Activated naive CD4-positive, alpha-beta T cell treated with anti-CD3 and anti-CD28 coated beads for 36 hours (primary cell): ENCODE measurements at regions of chr21 and their contacts with region 1.

Region 1: GRCh38 chr21:29298348-29299045 is at the start of gene BACH1:
- DNase-seq: peak; percentile 87
- H3K4me3 Mint-ChIP-seq: peak within 1 kb of the TSS; percentile 78
- H3K27ac Mint-ChIP-seq: peak within 1 kb of the TSS; percentile 76
- H3K4me1 Mint-ChIP-seq: peaks cover 66% of the 10 kb centered on the region
- H3K27me3 Mint-ChIP-seq: no peaks in the 10 kb centered on the region
- total RNA-seq, gene BACH1: 22.6 to 23.2 TPM

Region 2: DNA sequence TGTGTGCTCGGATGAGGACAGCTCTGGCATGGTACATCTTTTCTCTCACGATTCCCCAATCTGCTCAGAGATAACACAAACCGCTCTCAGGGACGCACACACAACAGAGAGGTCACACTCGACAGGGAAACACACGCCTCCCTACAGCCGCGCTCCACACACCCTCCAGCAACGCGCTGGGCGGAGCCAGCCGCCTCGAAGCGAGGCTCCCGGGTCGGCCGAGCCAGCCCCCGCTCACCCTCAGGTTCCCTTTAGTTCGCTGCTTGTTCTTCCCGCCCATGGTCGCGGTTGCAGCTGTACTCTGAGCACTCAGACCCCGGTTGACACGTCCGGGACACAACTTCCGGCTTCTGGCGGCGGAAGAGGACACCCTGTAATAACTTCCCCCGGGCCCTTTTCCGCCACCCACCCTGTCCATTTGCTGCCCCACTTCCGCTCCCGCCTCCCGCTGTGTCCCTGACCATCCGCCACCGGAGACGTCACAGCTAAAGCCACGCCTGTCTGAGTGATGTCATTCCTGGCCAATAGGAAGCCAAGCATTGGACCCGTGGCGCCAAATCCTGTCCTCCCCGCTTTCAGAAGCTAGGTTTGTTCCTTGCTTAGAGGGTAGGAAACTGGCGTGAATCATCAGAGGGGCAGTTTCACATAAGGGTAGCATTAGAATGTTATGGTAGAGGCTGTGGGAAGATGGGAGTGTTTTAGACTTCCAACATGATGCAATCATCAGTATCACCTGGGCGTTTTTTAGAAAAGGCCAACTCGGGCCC is 305.8 kb before region 1 on chr21 and contains the start of gene LTN1:
- CTCF ChIA-PET with region 1: no interaction called
- intact Hi-C with region 1: loop called (anchors 1 kb)
- DNase-seq: peak; percentile 100
- H3K4me3 Mint-ChIP-seq: peak within 1 kb of the TSS; percentile 99
- H3K27ac Mint-ChIP-seq: peak within 1 kb of the TSS; percentile 97
- H3K4me1 Mint-ChIP-seq: peaks cover 51% of the 10 kb centered on the region
- H3K27me3 Mint-ChIP-seq: no peaks in the 10 kb centered on the region
- total RNA-seq, gene LTN1: 18.5 to 21.2 TPM

Region 3: DNA sequence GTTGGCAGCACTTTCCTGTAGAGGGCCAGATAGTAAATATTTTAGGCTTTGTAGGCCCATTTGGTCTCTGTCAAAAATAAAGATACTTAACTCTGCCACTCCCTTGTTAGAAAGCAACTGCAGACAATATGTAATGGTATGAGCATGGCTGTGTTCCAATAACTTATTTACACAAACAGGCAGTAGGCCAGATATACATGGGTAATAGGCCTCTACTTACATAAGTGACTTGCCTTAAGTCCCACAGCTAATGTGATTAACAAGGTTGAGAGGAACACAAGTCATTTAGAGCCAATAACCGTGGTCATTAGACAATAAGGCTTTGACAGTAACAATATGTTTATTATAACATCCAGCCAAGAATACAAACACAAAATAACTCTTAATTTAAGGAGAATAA is 242.5 kb before region 1 on chr21:
- CTCF ChIA-PET with region 1: no interaction called
- intact Hi-C with region 1: no loop called
- DNase-seq: no peak
- H3K4me3 Mint-ChIP-seq: no peak overlapping the region
- H3K27ac Mint-ChIP-seq: no peak overlapping the region
- H3K4me1 Mint-ChIP-seq: no peaks in the 10 kb centered on the region
- H3K27me3 Mint-ChIP-seq: no peaks in the 10 kb centered on the region

Region 4: DNA sequence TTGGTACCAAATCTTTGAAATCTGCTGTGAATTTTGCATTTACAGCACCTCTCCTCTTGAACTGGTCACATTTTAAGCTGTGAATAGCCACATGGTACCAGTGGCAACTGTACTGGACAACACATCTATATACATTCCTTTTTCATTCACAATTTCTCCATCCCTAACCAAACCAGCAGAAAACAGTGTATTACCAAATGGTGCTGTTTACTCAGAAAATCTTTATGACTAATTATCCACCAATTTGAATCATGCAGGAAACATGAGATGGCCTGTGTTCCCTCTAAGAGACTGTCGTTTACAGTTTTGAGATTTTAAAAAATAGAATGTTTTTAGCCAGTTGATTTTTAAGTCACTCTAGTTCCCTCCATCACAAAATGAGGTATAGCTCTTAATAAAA is 207.5 kb before region 1 on chr21:
- CTCF ChIA-PET with region 1: interaction called, 5 read pairs
- intact Hi-C with region 1: loop called (anchors 1 kb)
- DNase-seq: no peak
- H3K4me3 Mint-ChIP-seq: no peak overlapping the region
- H3K27ac Mint-ChIP-seq: no peak overlapping the region
- H3K4me1 Mint-ChIP-seq: peaks cover 5% of the 10 kb centered on the region
- H3K27me3 Mint-ChIP-seq: no peaks in the 10 kb centered on the region

Region 5: GRCh38 chr21:29195981-29196669 is 102.4 kb before region 1 on chr21:
- CTCF ChIA-PET with region 1: interaction called, 4 read pairs
- intact Hi-C with region 1: loop called (anchors 1 kb)
- DNase-seq: peak; percentile 91
- H3K4me3 Mint-ChIP-seq: peak overlapping the region; percentile 63
- H3K27ac Mint-ChIP-seq: peak overlapping the region; percentile 90
- H3K4me1 Mint-ChIP-seq: peaks cover 36% of the 10 kb centered on the region
- H3K27me3 Mint-ChIP-seq: no peaks in the 10 kb centered on the region

Region 6: GRCh38 chr21:29343519-29343918 is 45.0 kb after region 1 on chr21:
- CTCF ChIA-PET with region 1: interaction called, 11 read pairs
- intact Hi-C with region 1: loop called (anchors 1 kb)
- DNase-seq: no peak
- H3K4me3 Mint-ChIP-seq: no peak overlapping the region
- H3K27ac Mint-ChIP-seq: no peak overlapping the region
- H3K4me1 Mint-ChIP-seq: peaks cover 39% of the 10 kb centered on the region
- H3K27me3 Mint-ChIP-seq: no peaks in the 10 kb centered on the region

Region 7: DNA sequence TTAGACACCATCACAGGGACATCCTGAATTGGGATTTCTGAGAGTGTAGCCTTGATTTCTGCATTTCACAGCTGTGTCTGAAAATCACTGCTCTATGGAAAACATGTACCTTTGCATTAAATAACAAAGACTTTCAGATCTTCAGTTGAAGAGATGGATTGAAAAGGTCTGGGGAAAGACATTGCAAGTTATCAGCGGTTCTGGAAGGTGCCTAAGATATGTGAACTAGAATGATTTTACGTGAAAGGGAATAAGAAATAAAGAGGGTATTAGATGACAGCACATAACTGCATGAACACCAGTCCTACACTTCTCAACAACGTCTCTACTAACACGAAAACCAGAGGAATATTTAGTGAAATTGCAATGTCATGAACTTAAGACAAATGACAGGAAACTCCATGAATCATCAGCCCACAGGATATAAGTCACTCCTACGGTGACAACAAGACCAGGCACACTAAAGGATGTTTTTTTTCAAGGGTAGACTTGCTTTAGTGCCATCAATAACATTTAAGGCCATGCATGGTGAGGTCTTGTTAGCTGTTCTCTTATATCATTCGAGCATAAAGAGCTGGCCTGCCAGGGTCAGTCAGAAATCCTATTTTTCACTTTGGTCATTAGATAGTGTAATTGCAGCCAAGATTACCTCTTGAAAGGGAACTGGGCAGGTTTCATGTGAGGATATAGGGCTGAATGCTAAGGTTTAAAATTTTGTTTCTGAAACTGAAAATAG is 358.2 kb after region 1 on chr21:
- CTCF ChIA-PET with region 1: no interaction called
- intact Hi-C with region 1: loop called (anchors 2 kb)
- DNase-seq: peak; percentile 21
- H3K4me3 Mint-ChIP-seq: peak overlapping the region; percentile 33
- H3K27ac Mint-ChIP-seq: peak overlapping the region; percentile 83
- H3K4me1 Mint-ChIP-seq: peaks cover 29% of the 10 kb centered on the region
- H3K27me3 Mint-ChIP-seq: peaks cover 9% of the 10 kb centered on the region